ENCODE measurements at regions of chr19 and their contacts with region 1.

Region 1: GRCh38 chr19:12777217-12778016 is 2.1 kb upstream of the HOOK2 start:
- DNase-seq: peak; percentile 78
- H3K4me3 Mint-ChIP-seq: peak overlapping the region; percentile 86
- H3K27ac Mint-ChIP-seq: peak overlapping the region; percentile 86
- H3K4me1 Mint-ChIP-seq: peaks cover 44% of the 10 kb centered on the region
- H3K27me3 Mint-ChIP-seq: no peaks in the 10 kb centered on the region

Region 2: DNA sequence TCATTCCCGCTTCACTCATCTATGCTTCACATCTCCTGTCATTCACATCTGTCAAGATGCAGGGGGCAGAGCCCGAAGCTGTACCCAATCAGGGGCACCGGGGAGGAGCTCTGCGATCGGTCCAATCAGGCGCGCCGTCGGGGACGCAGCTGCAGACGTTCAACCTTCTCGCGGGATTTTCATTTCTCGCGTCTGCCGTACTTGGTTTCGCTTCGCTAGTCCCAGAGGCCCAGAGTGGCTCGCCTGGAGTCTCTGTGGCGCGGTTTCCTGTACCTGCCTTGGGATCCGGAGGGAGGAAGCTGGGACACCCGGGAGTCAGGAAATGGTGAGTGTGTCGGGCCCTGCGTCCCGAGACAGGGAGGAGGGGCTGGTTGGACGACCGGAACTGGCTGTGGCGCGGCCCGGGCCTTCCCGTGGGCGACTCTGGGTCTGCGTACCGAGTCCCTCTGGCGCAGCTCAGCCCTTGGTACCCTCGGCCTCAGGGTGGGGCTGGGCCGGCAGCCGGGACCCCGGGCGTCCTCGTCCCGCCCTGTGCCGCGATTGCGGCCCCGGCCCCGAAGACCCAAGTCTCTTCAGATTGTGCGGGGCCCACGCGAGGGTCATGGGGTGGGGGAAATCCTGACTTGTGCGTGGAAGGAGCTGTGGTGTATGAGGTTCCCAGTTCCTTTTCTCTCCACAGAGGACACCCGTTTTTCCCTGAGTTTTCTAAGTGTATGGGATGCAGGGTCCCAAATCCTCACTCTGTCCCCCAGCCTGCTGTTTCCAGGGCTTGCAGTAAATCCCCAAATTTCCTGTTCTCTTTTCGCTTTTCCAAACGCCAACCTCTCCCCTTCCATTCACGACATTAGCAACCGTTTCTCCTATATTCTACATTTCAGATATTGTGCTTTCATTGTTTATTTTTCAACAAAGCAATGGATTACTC is 614.3 kb before region 1 on chr19 and contains the start of gene ZNF136:
- intact Hi-C with region 1: no loop called
- DNase-seq: peak; percentile 90
- H3K4me3 Mint-ChIP-seq: peak within 1 kb of the TSS; percentile 94
- H3K27ac Mint-ChIP-seq: peak within 1 kb of the TSS; percentile 93
- H3K4me1 Mint-ChIP-seq: peaks cover 28% of the 10 kb centered on the region
- H3K27me3 Mint-ChIP-seq: no peaks in the 10 kb centered on the region
- total RNA-seq, gene ZNF136: 10.1 and 10.8 TPM in 2 replicates

Region 3: GRCh38 chr19:12766051-12766521 is 11.3 kb before region 1 on chr19:
- intact Hi-C with region 1: loop called (anchors 1 kb)
- DNase-seq: peak; percentile 78
- H3K4me3 Mint-ChIP-seq: peak overlapping the region; percentile 51
- H3K27ac Mint-ChIP-seq: no peak overlapping the region
- H3K4me1 Mint-ChIP-seq: no peaks in the 10 kb centered on the region
- H3K27me3 Mint-ChIP-seq: no peaks in the 10 kb centered on the region

Region 4: DNA sequence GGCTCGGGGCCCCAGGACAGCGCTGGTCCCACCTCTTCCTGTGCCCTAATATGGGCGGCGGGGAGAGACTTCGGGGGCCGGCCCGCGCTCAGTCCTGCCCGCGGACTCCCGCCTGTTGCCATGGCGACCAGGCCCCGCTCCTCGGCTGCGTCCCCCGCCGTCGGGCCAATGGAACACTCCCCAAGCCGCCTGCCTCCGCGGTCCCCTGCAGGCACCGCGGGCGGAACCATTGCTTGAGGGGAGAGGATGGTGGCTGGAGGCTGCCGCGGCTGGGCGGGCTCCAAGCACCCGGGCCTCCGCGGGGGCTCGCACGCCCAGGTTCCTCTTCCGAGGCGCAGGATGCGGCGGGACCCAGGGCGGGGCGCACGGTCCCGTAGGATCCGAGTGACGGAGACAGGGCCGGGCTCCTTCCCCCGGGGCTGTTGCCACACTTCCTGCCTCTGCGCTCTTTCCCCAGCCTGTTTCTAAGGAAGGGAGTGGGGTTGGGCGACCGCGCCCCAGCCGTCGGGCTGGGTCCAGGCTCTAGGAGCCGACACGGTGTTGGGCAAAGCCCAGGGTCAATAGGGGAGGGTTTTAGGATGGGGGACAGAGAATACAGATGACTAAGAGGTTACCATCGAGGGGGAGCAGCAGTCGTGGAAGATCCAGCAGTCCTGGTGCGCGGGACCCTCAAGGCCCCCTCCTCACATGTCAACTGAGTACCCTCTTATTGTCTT is 12.6 kb after region 1 on chr19:
- intact Hi-C with region 1: loop called (anchors 1 kb)
- DNase-seq: peak; percentile 94
- H3K4me3 Mint-ChIP-seq: peak overlapping the region; percentile 97
- H3K27ac Mint-ChIP-seq: peak overlapping the region; percentile 91
- H3K4me1 Mint-ChIP-seq: peaks cover 30% of the 10 kb centered on the region
- H3K27me3 Mint-ChIP-seq: no peaks in the 10 kb centered on the region

Region 5: GRCh38 chr19:13033819-13034611 is 256.6 kb after region 1 on chr19:
- intact Hi-C with region 1: no loop called
- DNase-seq: no peak
- H3K4me3 Mint-ChIP-seq: no peak overlapping the region
- H3K27ac Mint-ChIP-seq: no peak overlapping the region
- H3K4me1 Mint-ChIP-seq: no peaks in the 10 kb centered on the region
- H3K27me3 Mint-ChIP-seq: peaks cover 9% of the 10 kb centered on the region

Measured in activated T-helper 1 cell treated with anti-CD3 and anti-CD28 coated beads, Interleukin-12 subunit alpha, Interleukin-12 subunit beta, Interleukin-2, Interleukin-4 antibody, amounts not matched to agents 30 ng/mL and 10 ng/mL and 1 ng/mL, durations not matched to agents 14 hours and 24 hours and 36 hours (primary cell).